Dorsolateral prefrontal cortex (tissue), 120 donors: ENCODE measurements at regions of chr6 and their contacts with region 1.

Region 1: GRCh38 chr6:105136431-105137350 is 43.1 kb downstream of the POPDC3 start:
- DNase-seq: peak; percentile 5 to 77 (median 46)
- H3K4me3 ChIP-seq: peak overlapping the region; percentile 58 to 94 (median 84)
- H3K27ac ChIP-seq: peak overlapping the region in 57 of 59 donors; percentile 36 to 96 (median 83)
- H3K27me3 ChIP-seq: peaks cover 0 to 7% (median 0%) of the 10 kb centered on the region in 45 donors
- CTCF ChIP-seq: peak in 31 of 56 donors; percentile 5 to 56 (median 29)

Region 2: DNA sequence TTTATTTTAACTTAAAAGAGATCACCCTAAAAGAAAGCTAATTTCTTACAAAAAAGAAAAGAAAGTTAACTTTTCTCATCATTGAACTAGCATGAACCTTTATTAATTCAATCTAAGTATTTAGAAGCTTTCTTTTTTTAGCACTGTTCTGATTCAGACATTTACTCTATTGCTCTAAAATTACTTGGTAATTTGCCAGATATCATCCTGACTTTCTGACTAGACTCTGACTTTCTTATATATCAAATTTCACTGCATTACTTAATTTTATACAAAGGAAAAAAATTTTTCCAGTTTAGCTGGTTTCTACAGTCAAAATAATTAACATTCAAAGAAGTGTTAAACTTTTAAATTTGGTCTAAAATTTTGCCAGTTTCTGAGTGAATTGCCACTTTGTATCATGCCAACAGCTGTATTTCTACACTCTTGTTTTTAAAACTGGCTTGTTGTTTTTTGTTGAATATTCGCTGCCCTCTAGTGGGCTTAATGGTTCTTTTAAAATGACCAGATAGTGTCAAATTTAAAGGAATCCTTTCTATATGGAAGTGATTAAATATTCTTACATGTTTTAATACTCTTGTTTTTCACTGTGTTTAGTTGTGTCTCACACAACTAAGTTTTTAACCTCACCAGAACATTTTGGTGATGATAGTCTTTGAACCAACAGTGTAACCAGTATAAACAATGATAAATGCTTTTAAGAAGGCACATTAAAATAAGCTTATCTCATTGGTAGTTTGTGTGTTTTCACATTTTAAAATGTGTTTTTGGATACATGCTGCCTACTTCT is 58.9 kb before region 1 on chr6:
- intact Hi-C with region 1: no loop called
- DNase-seq: no peak
- H3K4me3 ChIP-seq: no peak overlapping the region
- H3K27ac ChIP-seq: peak overlapping the region in 4 of 59 donors; percentile 0 to 40 (median 21)
- H3K27me3 ChIP-seq: no peaks in the 10 kb centered on the region
- CTCF ChIP-seq: peak; percentile 40 to 86 (median 68)

Region 3: GRCh38 chr6:105094133-105094640 is 42.5 kb before region 1 on chr6:
- intact Hi-C with region 1: loop called in 1 of 2 experiments (anchors 5 kb)
- DNase-seq: no peak
- H3K4me3 ChIP-seq: no peak overlapping the region
- H3K27ac ChIP-seq: no peak overlapping the region
- H3K27me3 ChIP-seq: no peaks in the 10 kb centered on the region
- CTCF ChIP-seq: no peak

Region 4: DNA sequence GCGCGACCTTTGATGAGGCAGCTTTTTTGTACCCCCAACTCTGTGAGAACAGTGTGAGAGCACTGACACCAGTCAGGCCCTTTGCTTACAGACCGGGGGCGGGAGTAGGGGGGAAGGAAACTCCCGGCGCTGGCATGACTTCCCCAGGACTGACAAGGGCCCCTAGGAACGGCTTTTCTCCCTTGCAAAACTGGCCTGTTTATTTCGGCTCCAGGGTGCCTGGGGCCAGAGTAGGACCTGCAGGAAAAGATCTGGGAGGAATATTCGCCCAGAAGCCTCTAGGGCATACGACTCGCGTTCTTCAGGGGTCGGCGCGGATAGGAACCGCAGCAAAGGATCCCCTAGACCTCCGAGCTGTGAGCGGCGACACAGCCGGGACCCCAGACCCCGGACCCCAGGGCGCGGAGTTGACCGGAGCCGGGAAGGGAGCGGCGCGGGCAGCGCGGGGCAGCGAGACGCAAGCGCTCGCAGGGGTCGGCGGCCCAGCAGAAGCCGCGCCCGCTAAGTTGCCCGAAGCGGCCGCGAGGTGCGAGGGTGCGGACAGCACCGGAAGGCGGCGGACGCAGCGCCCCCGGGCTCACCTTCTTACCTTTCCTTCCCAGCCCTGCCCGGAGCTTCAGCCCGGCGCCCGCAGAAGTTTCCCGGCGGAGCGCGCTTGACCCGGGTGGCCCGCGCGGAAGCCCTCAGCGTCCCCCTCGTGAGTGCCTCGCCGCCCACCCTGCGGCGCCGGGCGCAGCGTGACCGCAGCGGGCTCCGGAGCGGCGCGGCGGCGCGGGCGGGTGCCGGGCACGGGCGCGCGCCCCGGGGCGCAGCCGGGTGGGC is 42.8 kb after region 1 on chr6 and contains the start of gene POPDC3:
- intact Hi-C with region 1: loop called in 1 of 2 experiments (anchors 2 kb)
- DNase-seq: peak in 6 of 10 donors; percentile 22 to 58 (median 50)
- H3K4me3 ChIP-seq: peak within 1 kb of the TSS; percentile 52 to 82 (median 73)
- H3K27ac ChIP-seq: peak within 1 kb of the TSS; percentile 58 to 96 (median 92)
- H3K27me3 ChIP-seq: peaks cover 0 to 7% (median 0%) of the 10 kb centered on the region in 45 donors
- CTCF ChIP-seq: peak in 2 of 56 donors; percentile 18
- total RNA-seq, gene POPDC3: 8.8 to 27.8 (median 19.1) TPM

Region 5: GRCh38 chr6:105209950-105210706 is 73.4 kb after region 1 on chr6:
- intact Hi-C with region 1: no loop called
- DNase-seq: no peak
- H3K4me3 ChIP-seq: no peak overlapping the region
- H3K27ac ChIP-seq: peak overlapping the region in 3 of 59 donors; percentile 27 to 59 (median 36)
- H3K27me3 ChIP-seq: no peaks in the 10 kb centered on the region
- CTCF ChIP-seq: no peak

Region 6: DNA sequence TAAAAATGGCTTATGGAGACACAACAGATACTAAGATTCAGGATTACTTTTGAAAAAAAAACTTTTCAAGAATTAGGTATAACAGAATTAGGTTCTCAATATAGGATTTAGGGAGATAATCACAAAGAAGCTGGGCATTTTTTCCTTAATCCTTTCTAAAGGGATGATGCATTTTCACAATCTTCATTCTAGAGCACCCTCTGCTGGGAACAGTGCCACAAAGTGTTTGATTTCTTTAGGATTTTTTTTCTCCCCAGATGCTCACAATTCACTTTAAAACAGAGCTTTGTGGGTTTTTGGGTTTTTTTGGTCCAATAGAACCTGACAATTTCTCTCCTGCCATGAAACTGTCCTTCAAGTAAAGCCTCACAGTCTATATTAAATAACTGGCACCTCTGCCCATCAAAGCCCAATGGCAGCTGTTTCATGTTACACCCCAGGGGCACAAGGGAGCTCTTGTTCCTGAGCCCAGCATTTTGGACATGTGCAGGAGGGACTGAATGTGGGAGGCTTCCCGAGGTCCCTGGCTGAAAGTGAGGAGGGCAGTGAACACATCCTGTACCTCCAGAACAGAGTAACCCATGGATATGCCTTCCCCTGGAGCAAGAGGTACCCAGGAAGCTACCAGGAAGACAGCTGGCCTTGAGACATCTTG is 226.5 kb after region 1 on chr6:
- intact Hi-C with region 1: loop called in 1 of 2 experiments (anchors 5 kb)
- DNase-seq: peak in 1 of 10 donors; percentile 42
- H3K4me3 ChIP-seq: no peak overlapping the region
- H3K27ac ChIP-seq: peak overlapping the region in 50 of 59 donors; percentile 3 to 88 (median 62)
- H3K27me3 ChIP-seq: no peaks in the 10 kb centered on the region
- CTCF ChIP-seq: peak in 53 of 56 donors; percentile 35 to 78 (median 59)

Region 7: DNA sequence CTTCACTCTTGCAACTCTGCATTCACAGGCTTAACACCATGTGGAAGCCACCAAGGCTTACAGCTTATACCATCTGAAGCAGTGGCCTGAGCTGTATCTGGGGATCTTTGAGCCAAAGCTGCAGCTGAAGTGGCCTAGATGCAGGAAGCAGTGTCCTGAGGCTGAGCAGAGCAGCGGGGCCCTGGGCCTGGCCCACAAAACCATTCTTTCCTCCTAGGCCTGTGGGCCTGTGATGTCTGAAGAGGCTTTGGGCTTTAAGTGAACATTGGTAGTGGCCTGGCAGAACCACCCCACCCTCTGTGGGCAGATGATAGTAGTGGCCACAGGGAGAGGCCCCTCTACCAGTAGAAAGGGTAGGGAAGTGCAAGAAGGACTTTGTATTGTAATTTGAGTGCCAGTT is 273.0 kb after region 1 on chr6:
- intact Hi-C with region 1: no loop called
- DNase-seq: no peak
- H3K4me3 ChIP-seq: no peak overlapping the region
- H3K27ac ChIP-seq: no peak overlapping the region
- H3K27me3 ChIP-seq: no peaks in the 10 kb centered on the region
- CTCF ChIP-seq: no peak